MCF 10A (cell line): ENCODE measurements at regions of chr21 and their contacts with region 1.

Region 1: DNA sequence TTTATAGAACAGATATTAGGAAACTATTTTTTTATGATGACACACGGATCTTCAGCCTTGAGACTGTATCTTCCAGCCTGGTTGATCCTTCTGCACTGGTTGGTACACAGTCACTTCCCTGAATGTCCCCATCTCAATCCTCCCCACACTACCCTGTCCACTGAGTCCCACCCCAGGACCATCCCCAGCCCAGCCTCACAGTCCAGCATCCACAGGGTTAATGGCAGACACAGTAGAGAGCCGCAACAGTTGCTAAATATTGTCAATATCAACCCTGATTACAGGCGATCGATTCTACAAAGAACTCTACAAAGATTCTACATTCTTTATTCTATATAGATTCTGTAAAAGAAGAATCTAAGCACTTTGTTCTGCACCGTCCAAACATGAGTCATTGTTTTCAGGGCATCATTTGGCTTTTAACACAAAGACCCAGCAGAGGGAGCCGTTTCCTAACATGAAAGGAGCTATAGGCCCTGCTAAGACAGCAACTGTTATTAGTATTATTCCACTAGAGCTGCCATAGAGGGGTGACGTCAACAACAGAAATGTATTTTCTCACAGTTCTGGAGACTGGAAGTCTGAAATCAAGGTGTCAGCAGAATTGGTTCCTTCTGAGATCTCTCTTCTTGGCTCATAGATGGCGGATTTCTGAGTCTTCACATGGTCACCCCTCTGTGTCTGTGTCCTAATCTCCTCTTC is 30.1 kb upstream of the IFNAR2 start:
- DNase-seq: peak; percentile 96
- H3K4me3 Mint-ChIP-seq: no peak overlapping the region
- H3K27ac Mint-ChIP-seq: no peak overlapping the region
- H3K4me1 Mint-ChIP-seq: peaks cover 20% of the 10 kb centered on the region
- H3K27me3 Mint-ChIP-seq: peaks cover 20% of the 10 kb centered on the region
- CTCF ChIP-seq: peak; percentile 76

Region 2: GRCh38 chr21:32826329-32827167 is 373.1 kb before region 1 on chr21:
- CTCF ChIA-PET with region 1: interaction called, 12 read pairs
- POLR2A ChIA-PET with region 1: no interaction called
- intact Hi-C with region 1: loop called (anchors 5 kb)
- DNase-seq: peak; percentile 64
- H3K4me3 Mint-ChIP-seq: no peak overlapping the region
- H3K27ac Mint-ChIP-seq: no peak overlapping the region
- H3K4me1 Mint-ChIP-seq: no peaks in the 10 kb centered on the region
- H3K27me3 Mint-ChIP-seq: no peaks in the 10 kb centered on the region
- CTCF ChIP-seq: peak; percentile 50

Region 3: DNA sequence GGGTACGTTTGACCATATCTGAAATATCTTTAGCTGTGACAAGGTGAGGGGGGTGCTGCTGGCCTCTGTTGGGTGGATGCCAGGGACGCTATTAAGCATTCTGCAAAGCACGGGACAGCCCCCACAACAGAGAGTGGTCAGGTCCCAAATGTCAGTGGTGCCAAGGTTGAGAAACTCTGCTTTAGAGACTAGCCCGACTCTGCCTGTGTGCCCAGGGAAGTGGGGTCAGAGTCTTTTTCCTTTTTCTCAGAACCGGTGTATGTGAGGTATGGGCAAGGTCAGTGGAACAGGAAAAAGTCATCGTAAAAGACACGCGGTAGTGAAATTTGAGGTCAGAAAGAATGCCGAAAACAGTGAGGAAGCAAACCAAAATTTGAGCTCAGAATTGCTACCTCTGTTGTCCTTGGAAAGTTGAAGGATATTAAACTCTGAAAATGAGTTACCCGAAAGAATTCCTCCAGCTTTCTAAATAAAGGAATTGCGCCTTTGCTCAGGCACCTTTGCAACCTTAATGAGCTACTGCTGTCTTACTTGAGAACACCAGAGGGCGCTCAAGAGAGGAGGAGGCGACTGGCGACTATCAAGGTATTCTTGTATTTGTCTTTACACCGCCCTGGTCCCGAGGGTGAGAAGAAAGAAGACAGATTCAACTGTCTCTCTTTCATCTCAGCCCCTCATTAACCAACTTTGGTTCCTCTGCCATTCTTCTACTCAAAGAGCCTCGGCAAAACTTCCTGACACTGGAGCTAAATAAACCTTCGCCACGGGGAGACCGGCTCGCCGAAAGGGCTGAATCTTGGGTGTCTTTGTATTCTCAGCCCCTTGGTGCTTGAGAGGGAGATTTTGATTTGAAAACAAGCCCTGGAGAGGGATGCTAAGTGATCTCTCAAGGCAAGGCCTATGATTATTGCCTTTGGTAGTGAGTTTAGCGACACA is 259.3 kb before region 1 on chr21:
- CTCF ChIA-PET with region 1: interaction called, 38 read pairs
- POLR2A ChIA-PET with region 1: interaction called, 3 read pairs
- intact Hi-C with region 1: loop called (anchors 1 kb)
- DNase-seq: peak; percentile 67
- H3K4me3 Mint-ChIP-seq: no peak overlapping the region
- H3K27ac Mint-ChIP-seq: no peak overlapping the region
- H3K4me1 Mint-ChIP-seq: no peaks in the 10 kb centered on the region
- H3K27me3 Mint-ChIP-seq: peaks cover 50% of the 10 kb centered on the region
- CTCF ChIP-seq: peak; percentile 55

Region 4: DNA sequence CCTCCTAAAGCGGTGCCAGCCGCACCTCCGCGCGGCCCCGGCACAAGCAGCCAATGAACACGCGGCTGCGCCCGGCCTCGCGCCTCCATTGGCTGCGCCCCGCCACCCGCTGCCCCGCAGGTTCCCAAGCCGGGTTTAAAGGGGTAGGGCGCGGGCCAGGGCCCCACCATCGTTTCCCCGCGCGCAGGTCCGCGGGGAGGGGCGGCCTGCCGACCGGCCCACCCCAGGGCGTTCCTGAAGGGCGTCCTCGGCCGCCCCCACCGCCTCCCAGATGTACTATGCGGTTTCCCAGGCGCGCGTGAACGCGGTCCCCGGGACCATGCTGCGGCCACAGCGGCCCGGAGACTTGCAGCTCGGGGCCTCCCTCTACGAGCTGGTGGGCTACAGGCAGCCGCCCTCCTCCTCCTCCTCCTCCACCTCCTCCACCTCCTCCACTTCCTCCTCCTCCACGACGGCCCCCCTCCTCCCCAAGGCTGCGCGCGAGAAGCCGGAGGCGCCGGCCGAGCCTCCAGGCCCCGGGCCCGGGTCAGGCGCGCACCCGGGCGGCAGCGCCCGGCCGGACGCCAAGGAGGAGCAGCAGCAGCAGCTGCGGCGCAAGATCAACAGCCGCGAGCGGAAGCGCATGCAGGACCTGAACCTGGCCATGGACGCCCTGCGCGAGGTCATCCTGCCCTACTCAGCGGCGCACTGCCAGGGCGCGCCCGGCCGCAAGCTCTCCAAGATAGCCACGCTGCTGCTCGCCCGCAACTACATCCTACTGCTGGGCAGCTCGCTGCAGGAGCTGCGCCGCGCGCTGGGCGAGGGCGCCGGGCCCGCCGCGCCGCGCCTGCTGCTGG is 129.5 kb before region 1 on chr21 and contains the start of gene OLIG1:
- CTCF ChIA-PET with region 1: no interaction called
- POLR2A ChIA-PET with region 1: no interaction called
- intact Hi-C with region 1: no loop called
- DNase-seq: no peak
- H3K4me3 Mint-ChIP-seq: peak within 1 kb of the TSS; percentile 49
- H3K27ac Mint-ChIP-seq: no peak within 1 kb of the TSS
- H3K4me1 Mint-ChIP-seq: no peaks in the 10 kb centered on the region
- H3K27me3 Mint-ChIP-seq: peaks cover 88% of the 10 kb centered on the region
- CTCF ChIP-seq: no peak
- total RNA-seq, gene OLIG1: not detected in 2 replicates

Region 5: DNA sequence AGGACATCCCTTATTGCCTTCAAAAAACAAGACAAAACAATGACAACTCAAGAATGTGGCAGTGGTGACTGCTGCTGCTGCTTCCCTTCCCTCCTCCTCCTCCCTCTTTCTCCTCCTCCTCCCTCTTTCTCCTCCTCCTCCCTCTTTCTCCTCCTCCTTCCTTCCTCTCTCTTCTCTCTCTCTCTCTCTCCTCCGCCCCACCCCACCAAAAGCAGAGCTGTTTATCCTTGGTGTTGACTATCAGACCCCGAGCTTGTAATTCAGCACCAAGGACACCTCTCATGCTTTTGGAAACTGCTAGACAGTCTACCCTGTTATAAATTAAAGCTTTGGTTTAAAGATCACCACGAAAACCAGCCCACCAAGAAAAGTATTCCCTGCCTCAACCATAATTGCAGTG is 42.4 kb before region 1 on chr21:
- CTCF ChIA-PET with region 1: no interaction called
- POLR2A ChIA-PET with region 1: no interaction called
- intact Hi-C with region 1: no loop called
- DNase-seq: no peak
- H3K4me3 Mint-ChIP-seq: no peak overlapping the region
- H3K27ac Mint-ChIP-seq: no peak overlapping the region
- H3K4me1 Mint-ChIP-seq: no peaks in the 10 kb centered on the region
- H3K27me3 Mint-ChIP-seq: peaks cover 94% of the 10 kb centered on the region
- CTCF ChIP-seq: no peak

Region 6: DNA sequence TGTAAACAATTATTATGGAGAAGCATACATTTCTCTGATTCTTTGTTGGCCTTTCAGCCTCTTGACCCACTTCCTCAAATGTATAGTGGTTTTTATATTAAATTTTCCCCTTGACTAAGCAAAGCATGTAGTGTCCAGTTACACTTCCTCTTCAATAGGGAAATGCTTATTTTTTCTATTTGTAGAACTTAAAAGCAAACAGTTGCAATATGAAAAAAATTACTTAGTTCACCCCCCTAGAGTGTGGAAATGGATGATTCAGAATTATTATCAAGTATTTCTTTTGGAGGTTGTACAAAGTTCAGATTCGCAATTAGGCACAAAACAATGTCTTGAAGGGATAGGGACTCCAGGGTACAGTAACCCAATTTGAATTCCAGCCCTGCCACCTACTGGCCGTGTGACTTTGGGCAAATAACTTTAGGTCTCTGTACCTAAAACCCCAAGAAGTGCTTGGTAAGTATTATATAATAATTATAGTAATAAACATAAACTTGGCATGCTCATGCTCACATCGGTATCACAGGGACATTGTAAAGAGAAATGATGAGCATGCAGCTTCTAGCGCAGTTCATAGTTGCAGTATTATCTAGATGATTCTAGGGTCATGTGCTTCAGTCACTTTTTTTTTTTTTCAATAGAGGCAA is 174.9 kb after region 1 on chr21:
- CTCF ChIA-PET with region 1: interaction called, 5 read pairs
- POLR2A ChIA-PET with region 1: interaction called, 8 read pairs
- intact Hi-C with region 1: loop called (anchors 1 kb)
- DNase-seq: peak; percentile 72
- H3K4me3 Mint-ChIP-seq: no peak overlapping the region
- H3K27ac Mint-ChIP-seq: no peak overlapping the region
- H3K4me1 Mint-ChIP-seq: peaks cover 13% of the 10 kb centered on the region
- H3K27me3 Mint-ChIP-seq: no peaks in the 10 kb centered on the region
- CTCF ChIP-seq: peak; percentile 54

Region 7: GRCh38 chr21:33608559-33608958 is 408.9 kb after region 1 on chr21:
- CTCF ChIA-PET with region 1: interaction called, 6 read pairs
- POLR2A ChIA-PET with region 1: no interaction called
- intact Hi-C with region 1: loop called (anchors 5 kb)
- DNase-seq: no peak
- H3K4me3 Mint-ChIP-seq: no peak overlapping the region
- H3K27ac Mint-ChIP-seq: peak overlapping the region; percentile 41
- H3K4me1 Mint-ChIP-seq: no peaks in the 10 kb centered on the region
- H3K27me3 Mint-ChIP-seq: no peaks in the 10 kb centered on the region
- CTCF ChIP-seq: no peak